Mammary epithelial cell (primary cell): ENCODE measurements at regions of chr2 and their contacts with region 1.

Region 1: GRCh38 chr2:70340921-70341765 is 39.3 kb upstream of the FAM136A start:
- DNase-seq: peak; percentile 57
- H3K4me3 ChIP-seq: no peak overlapping the region
- H3K27ac ChIP-seq: peak overlapping the region; percentile 2
- H3K4me1 ChIP-seq: peaks cover 33% of the 10 kb centered on the region
- H3K27me3 ChIP-seq: no peaks in the 10 kb centered on the region
- CTCF ChIP-seq: peak; percentile 87 to 89

Region 2: GRCh38 chr2:70283500-70284191 is 57.5 kb before region 1 on chr2:
- CTCF ChIA-PET with region 1: no interaction called
- dilution Hi-C with region 1: no loop called
- in situ Hi-C with region 1: no loop called
- intact Hi-C with region 1: no loop called
- DNase-seq: no peak
- H3K4me3 ChIP-seq: no peak overlapping the region
- H3K27ac ChIP-seq: no peak overlapping the region
- H3K4me1 ChIP-seq: no peaks in the 10 kb centered on the region
- H3K27me3 ChIP-seq: no peaks in the 10 kb centered on the region
- CTCF ChIP-seq: no peak

Region 3: GRCh38 chr2:70367722-70368323 is 26.7 kb after region 1 on chr2:
- CTCF ChIA-PET with region 1: no interaction called
- dilution Hi-C with region 1: no loop called
- in situ Hi-C with region 1: no loop called
- intact Hi-C with region 1: no loop called
- DNase-seq: peak; percentile 50
- H3K4me3 ChIP-seq: no peak overlapping the region
- H3K27ac ChIP-seq: peak overlapping the region; percentile 18
- H3K4me1 ChIP-seq: peaks cover 22% of the 10 kb centered on the region
- H3K27me3 ChIP-seq: no peaks in the 10 kb centered on the region
- CTCF ChIP-seq: no peak

Region 4: GRCh38 chr2:70388128-70388527 is 47.0 kb after region 1 on chr2:
- CTCF ChIA-PET with region 1: no interaction called
- dilution Hi-C with region 1: no loop called
- in situ Hi-C with region 1: no loop called
- intact Hi-C with region 1: loop called (anchors 1 kb)
- DNase-seq: peak; percentile 96
- H3K4me3 ChIP-seq: no peak overlapping the region
- H3K27ac ChIP-seq: peak overlapping the region; percentile 88
- H3K4me1 ChIP-seq: peaks cover 51% of the 10 kb centered on the region
- H3K27me3 ChIP-seq: no peaks in the 10 kb centered on the region
- CTCF ChIP-seq: no peak

Region 5: DNA sequence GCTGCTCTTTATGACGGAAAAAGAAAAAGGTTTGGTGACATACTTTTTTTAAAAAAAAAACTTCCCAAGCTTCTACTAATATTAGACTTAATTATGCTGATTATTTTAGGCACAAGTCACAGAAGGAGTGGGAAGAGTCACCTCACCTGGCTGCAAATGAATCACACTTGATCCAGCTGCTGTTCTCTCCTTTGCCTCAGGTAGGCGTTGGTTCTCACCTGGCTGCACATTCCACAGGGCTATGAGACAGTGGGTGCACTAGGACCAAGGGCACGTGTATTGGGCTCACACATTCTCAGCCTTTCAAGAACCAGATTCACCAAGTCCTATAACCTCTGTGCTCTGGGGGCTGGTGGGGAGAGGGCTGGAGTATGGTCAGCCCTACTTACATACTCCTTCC is 119.2 kb after region 1 on chr2:
- CTCF ChIA-PET with region 1: no interaction called
- dilution Hi-C with region 1: no loop called
- in situ Hi-C with region 1: no loop called
- intact Hi-C with region 1: loop called (anchors 2 kb)
- DNase-seq: peak; percentile 24
- H3K4me3 ChIP-seq: no peak overlapping the region
- H3K27ac ChIP-seq: no peak overlapping the region
- H3K4me1 ChIP-seq: peaks cover 6% of the 10 kb centered on the region
- H3K27me3 ChIP-seq: no peaks in the 10 kb centered on the region
- CTCF ChIP-seq: peak; percentile 51 to 58

Region 6: DNA sequence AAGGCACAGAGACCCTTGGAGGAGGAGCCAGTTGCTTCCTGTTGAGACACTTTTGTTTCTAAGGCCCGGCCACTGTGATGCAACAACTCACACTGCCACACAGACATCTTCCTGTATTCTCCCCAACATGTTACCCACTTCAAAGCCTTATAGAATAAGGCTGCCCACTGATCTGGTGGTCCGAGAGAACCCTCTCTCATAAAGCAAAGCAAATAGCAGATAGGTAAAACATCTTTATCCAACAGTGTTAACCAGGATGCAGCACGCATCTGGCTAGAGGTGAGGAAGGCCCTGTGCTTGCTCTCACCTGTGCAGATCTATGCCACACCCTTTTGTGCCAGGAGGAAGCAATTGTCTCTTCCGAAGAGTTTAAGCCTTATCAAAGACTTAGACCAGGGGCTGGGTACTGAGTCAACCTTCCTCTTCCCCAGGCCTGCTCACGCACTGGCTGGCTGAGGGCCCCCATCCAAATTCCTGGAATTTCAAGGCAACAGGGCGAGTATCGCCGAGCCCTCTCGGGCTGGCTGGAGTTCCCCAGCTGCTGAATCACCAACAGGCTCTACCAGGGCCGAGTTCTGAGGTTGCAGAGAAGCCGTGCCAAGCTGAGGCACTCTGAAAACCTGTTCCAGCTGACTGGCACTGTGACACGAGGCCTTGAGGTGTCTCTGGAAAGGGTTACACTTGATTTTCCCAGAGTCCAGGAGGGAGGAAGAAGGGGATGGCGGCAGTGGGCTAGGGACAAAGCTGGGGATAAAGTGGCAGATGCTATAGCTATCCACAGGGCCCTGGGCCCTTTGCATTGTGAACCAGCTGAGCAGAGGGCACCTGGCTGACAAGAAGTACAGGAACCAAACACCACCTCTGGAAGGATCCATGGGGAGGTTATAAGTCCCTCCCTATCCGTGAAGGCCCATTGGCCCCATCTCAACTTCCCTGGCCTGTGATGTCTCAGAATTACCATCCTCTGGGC is 183.1 kb after region 1 on chr2:
- CTCF ChIA-PET with region 1: no interaction called
- dilution Hi-C with region 1: no loop called
- in situ Hi-C with region 1: no loop called
- intact Hi-C with region 1: loop called (anchors 10 kb)
- DNase-seq: peak; percentile 99
- H3K4me3 ChIP-seq: peak overlapping the region in 1 of 3 experiments; percentile 5
- H3K27ac ChIP-seq: peak overlapping the region; percentile 97
- H3K4me1 ChIP-seq: peaks cover 62% of the 10 kb centered on the region
- H3K27me3 ChIP-seq: no peaks in the 10 kb centered on the region
- CTCF ChIP-seq: no peak